ENCODE measurements at regions of chr15 and their contacts with region 1.

Region 1: DNA sequence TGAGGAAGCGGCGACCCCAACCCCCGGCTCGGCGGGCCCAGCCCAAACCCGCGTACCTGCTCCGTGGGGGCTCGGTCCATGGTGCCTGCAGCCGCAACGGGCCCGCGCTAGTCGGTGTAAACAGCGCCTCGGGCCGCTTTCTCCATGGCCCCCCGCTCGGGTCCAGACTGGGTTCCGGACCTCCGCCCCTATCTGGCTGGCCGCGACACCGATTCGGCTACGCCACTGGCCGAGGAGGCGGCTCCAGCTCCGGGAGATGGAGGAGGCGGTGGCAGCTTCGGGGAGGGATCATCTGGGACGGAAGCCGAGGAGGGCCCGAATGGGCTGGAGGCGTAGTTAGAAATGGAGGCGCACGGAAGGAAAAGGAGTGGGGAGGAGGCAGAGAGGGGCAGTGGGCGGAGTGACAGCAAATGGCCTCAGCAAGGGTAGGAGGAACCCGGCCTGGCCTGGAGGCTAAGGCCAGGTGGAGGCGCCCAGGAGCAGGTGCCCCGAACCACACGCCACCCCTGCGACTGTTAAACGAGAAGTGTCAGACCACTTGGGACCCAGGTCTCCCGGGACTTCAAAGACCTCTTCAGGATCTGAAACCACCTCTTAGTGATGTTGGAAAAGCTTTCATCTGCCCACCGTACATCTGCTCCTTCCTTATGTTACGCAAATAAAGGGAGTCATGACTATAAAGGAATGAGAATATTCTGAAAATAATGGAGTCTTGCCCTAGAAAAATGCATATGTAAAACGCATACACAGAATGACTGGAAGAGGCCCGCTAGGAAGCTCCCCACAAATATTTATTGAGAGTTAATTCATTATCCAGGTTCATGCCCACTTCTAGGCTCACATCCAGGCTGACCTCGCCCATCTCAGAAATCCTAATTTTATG is at the start of gene SECISBP2L:
- DNase-seq: peak; percentile 92
- H3K4me3 ChIP-seq: peak within 1 kb of the TSS; percentile 90 to 91
- H3K27ac ChIP-seq: peak within 1 kb of the TSS; percentile 86
- H3K4me1 ChIP-seq: no peaks in the 10 kb centered on the region
- H3K27me3 ChIP-seq: no peaks in the 10 kb centered on the region
- CTCF ChIP-seq: peak in 2 of 4 experiments; percentile 10 to 20
- POLR2A ChIP-seq: peak; percentile 73
- total RNA-seq, gene SECISBP2L: 39.6 to 46.4 TPM

Region 2: DNA sequence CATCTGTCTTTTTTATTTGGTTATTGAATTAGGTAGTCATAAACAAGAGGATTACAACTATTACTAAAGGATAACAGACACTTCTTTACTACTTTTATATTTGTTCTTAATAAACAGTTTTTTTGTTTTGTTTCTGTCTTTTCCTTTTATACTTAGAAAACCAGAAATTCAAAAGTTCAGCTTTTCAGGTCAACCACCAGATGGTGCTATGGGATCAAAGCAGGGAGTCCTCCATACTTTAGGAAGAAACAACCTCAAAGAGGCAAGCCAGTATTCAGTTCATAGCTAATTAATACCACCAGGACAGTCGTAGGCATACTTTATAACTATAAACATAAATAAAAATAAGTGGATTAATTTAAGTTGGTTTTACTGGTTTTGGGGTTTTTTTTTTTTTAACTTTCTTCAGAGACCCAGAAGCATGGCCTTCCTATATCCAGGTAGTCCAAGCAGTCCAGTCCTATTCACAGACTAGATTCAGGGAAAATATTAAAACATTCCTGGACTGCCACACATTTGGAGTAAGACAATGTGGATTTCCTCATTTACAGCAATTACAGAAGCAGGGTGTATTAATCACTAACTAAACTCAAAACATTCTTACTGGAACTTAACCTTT is 184.5 kb before region 1 on chr15:
- intact Hi-C with region 1: loop called (anchors 10 kb)
- DNase-seq: no peak
- H3K4me3 ChIP-seq: no peak overlapping the region
- H3K27ac ChIP-seq: no peak overlapping the region
- H3K4me1 ChIP-seq: no peaks in the 10 kb centered on the region
- H3K27me3 ChIP-seq: no peaks in the 10 kb centered on the region
- CTCF ChIP-seq: peak; percentile 75 to 86 (median 82)
- POLR2A ChIP-seq: no peak

Region 3: GRCh38 chr15:49155110-49155833 is 108.8 kb after region 1 on chr15 and contains the start of gene COPS2:
- intact Hi-C with region 1: loop called (anchors 10 kb)
- DNase-seq: peak; percentile 96
- H3K4me3 ChIP-seq: peak within 1 kb of the TSS; percentile 76 to 80
- H3K27ac ChIP-seq: peak within 1 kb of the TSS; percentile 85
- H3K4me1 ChIP-seq: no peaks in the 10 kb centered on the region
- H3K27me3 ChIP-seq: no peaks in the 10 kb centered on the region
- CTCF ChIP-seq: peak in 3 of 4 experiments; percentile 15 to 29 (median 21)
- POLR2A ChIP-seq: peak; percentile 48
- total RNA-seq, gene COPS2: 36.3 to 65.3 TPM

Region 4: DNA sequence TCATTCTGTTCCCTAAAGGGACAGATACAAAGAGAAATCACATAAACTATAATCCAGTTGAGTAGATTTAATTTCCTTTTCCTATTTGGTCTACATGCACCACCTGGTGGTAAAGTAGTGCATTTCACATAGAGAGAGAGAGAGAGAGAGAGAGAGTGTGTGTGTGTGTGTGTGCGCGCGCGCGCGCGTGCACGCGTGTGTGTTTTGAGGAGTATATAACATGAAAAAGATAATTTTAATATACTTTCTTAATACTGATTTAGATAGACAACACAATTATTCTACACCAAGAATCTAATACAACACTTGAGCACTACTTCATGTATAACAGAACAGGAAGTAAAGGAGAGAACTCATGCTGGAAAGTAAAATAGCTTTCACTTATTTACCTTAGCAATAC is 375.5 kb after region 1 on chr15:
- intact Hi-C with region 1: loop called (anchors 10 kb)
- DNase-seq: no peak
- H3K4me3 ChIP-seq: no peak overlapping the region
- H3K27ac ChIP-seq: no peak overlapping the region
- H3K4me1 ChIP-seq: no peaks in the 10 kb centered on the region
- H3K27me3 ChIP-seq: no peaks in the 10 kb centered on the region
- CTCF ChIP-seq: peak; percentile 44 to 89 (median 61)
- POLR2A ChIP-seq: no peak

Measured in prostate gland (tissue), 2 donors.